IMR-90 (cell line): ENCODE measurements at regions of chr10 and their contacts with region 1.

Region 1: DNA sequence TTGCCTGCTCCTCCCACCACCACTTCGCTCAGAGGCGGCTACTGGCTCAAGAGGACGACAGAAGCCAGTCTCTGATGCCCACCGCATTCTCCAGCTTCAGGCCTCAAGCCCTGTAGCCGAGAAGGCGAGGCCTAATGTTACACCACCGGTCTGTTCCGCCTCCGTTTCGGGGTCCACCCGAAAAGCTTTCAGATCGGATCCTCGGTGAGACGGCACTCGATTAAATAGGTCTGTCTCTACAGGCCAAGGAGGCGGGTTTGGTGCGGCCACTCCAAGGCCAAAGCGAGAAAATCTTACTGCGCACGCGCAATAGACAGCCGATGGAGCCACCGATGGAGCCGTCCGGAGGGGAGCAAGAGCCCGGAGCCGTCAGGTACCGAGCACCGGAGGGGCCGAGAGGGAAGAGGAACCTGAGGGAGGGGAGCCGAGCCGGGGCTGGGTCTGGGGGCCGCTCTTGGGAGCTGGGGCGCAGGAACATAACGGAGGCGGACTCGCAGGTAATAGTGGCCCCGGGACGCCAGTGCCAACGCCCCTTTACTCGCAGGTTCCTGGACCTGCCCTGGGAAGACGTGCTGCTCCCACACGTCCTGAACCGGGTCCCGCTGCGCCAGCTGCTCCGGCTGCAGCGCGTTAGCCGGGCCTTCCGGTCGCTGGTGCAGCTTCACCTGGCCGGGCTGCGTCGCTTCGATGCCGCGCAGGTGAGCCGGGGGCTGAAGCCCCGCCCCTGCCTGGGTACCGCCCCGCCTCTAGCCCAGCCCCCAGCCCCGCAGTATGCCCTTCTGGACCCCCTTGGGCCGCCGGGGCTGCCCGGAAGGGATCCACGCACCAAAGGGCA is at the start of gene FBXL15:
- DNase-seq: peak; percentile 95
- ATAC-seq: peak; percentile 91
- H3K4me3 ChIP-seq: peak within 1 kb of the TSS; percentile 55
- H3K27ac ChIP-seq: peak within 1 kb of the TSS; percentile 77
- H3K4me1 ChIP-seq: peaks cover 9% of the 10 kb centered on the region
- H3K27me3 ChIP-seq: peaks cover 13% of the 10 kb centered on the region; the same call in 1 of the 2 replicates
- CTCF ChIP-seq: no peak
- POLR2A ChIP-seq: 0 out of 2 replicates have a peak, but pooled peaks have one; percentile 23
- RAD21 ChIP-seq: no peak
- total RNA-seq, gene FBXL15: 2.5 and 3.0 TPM in 2 replicates

Region 2: GRCh38 chr10:102394079-102394800 is 26.8 kb before region 1 on chr10:
- CTCF ChIA-PET with region 1: interaction called, 6 read pairs
- POLR2A ChIA-PET with region 1: no interaction called
- dilution Hi-C with region 1: no loop called
- in situ Hi-C with region 1: no loop called
- intact Hi-C with region 1: loop called (anchors 1 kb)
- DNase-seq: peak; percentile 95
- ATAC-seq: peak; percentile 89
- H3K4me3 ChIP-seq: peak overlapping the region; percentile 51
- H3K27ac ChIP-seq: peak overlapping the region; percentile 55
- H3K4me1 ChIP-seq: peaks cover 7% of the 10 kb centered on the region
- H3K27me3 ChIP-seq: no peaks in the 10 kb centered on the region
- CTCF ChIP-seq: no peak; the same call in 1 of the 2 replicates
- POLR2A ChIP-seq: peak; percentile 93
- RAD21 ChIP-seq: no peak

Region 3: DNA sequence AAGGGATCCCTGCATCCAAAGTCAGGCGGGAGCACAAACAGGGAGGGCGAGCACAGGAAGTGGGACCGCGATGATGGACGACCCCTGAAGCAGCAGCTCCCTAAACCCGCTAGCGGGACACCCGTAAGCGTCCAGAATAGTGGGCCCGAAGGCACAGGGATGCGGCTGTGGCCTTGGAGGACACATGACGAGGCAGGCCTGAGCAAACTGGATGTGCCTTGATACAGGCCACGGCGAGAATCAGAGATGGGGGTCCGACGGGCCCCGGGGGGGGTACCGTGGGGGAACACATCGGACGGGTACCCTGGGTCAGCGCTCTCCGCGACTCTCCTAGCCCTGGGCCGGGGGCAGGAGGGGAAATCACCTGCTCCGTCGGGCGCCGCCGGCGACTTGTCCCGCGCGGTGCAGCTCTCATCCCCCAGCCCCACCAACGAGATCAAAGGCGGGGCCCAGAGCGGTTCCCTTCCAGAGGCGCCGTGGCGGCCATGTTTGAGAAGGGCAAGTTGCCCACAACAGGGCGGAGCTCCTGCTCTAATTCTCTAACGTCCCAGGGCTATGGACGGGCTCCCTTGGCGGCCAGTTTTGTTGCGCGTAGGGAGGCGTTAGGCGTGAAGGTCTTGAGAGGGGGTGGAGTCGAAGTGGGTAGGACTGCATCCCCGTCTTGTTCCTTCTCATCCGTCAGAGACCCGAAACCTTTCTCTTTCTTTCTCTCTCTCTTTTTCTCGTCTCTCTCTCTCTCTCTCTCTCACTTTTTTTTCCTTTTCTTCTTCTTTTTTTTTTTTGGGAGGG is 11.3 kb after region 1 on chr10 and contains the start of gene CUEDC2:
- CTCF ChIA-PET with region 1: no interaction called
- POLR2A ChIA-PET with region 1: interaction called, 17 read pairs
- dilution Hi-C with region 1: no loop called
- in situ Hi-C with region 1: no loop called
- intact Hi-C with region 1: no loop called
- DNase-seq: peak; percentile 94
- ATAC-seq: peak; percentile 95
- H3K4me3 ChIP-seq: peak within 1 kb of the TSS; percentile 70
- H3K27ac ChIP-seq: peak within 1 kb of the TSS; percentile 85
- H3K4me1 ChIP-seq: peaks cover 13% of the 10 kb centered on the region
- H3K27me3 ChIP-seq: no peaks in the 10 kb centered on the region
- CTCF ChIP-seq: 0 out of 2 replicates have a peak, but pooled peaks have one; percentile 5
- POLR2A ChIP-seq: peak; percentile 62; the same call in 1 of the 2 replicates
- RAD21 ChIP-seq: no peak
- total RNA-seq, gene CUEDC2: 43.6 and 55.7 TPM in 2 replicates